CD8-positive, alpha-beta memory T cell (primary cell): ENCODE measurements at regions of chr17 and their contacts with region 1.

Region 1: GRCh38 chr17:76063875-76064546 is 8.3 kb downstream of the SRP68 start:
- DNase-seq: peak in 1 of 5 donors; percentile 31
- H3K4me3 ChIP-seq: no peak overlapping the region
- H3K4me3 Mint-ChIP-seq: peak overlapping the region; percentile 10 to 76 (median 64)
- H3K27ac ChIP-seq: no peak overlapping the region
- H3K27ac Mint-ChIP-seq: peak overlapping the region; percentile 73 to 97 (median 90)
- H3K4me1 ChIP-seq: no peaks in the 10 kb centered on the region
- H3K4me1 Mint-ChIP-seq: peaks cover 13 to 32% (median 24%) of the 10 kb centered on the region in 3 donors
- H3K27me3 ChIP-seq: no peaks in the 10 kb centered on the region
- H3K27me3 Mint-ChIP-seq: no peaks in the 10 kb centered on the region

Region 2: GRCh38 chr17:76179496-76180467 is 115.8 kb after region 1 on chr17:
- CTCF ChIA-PET with region 1: no interaction called
- POLR2A ChIA-PET with region 1: no interaction called
- DNase-seq: peak in 3 of 5 donors; percentile 49 to 76 (median 55)
- H3K4me3 ChIP-seq: peak overlapping the region; percentile 21
- H3K4me3 Mint-ChIP-seq: peak overlapping the region; percentile 8 to 57 (median 45)
- H3K27ac ChIP-seq: peak overlapping the region; percentile 28
- H3K27ac Mint-ChIP-seq: peak overlapping the region; percentile 83 to 95 (median 90)
- H3K4me1 ChIP-seq: peaks cover 77% of the 10 kb centered on the region
- H3K4me1 Mint-ChIP-seq: peaks cover 34 to 57% (median 52%) of the 10 kb centered on the region in 3 donors
- H3K27me3 ChIP-seq: no peaks in the 10 kb centered on the region
- H3K27me3 Mint-ChIP-seq: no peaks in the 10 kb centered on the region

Region 3: DNA sequence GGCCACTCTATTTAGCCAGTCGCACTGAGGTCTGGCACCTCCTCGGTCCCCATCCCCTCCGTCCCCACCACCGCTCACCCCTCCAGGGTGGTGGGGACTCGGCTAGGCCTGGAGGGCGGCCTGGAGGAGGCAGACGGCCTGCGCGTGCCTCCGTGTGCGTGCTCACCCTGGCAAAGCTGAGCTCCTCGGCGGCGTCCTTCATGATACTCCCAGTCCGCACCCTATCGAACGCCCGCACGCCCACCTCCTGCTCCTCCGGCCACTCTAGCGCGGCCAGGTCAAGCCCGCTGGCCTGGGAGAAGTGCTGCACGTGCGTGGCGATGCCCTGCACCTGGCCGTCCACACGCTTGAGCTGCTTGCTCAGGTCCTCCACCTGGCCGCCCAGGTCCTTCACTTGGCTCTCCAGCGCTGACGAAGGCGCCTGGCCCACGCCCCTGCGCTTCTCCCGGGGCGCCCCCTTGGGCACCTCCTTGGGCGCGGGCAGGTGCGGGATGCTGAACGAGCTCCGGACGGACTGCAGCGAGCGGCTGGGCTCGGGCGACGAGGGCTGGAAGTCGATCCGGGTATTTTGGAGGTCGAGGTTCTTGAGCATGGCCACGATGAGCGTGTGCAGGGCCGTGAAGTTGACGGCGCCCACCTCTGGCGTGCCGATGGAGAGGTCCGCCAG is 243.4 kb after region 1 on chr17:
- CTCF ChIA-PET with region 1: no interaction called
- POLR2A ChIA-PET with region 1: interaction called, 10 read pairs
- DNase-seq: no peak
- H3K4me3 ChIP-seq: no peak overlapping the region
- H3K4me3 Mint-ChIP-seq: no peak overlapping the region
- H3K27ac ChIP-seq: no peak overlapping the region
- H3K27ac Mint-ChIP-seq: no peak overlapping the region
- H3K4me1 ChIP-seq: no peaks in the 10 kb centered on the region
- H3K4me1 Mint-ChIP-seq: peaks cover 0 to 4% (median 2%) of the 10 kb centered on the region in 3 donors
- H3K27me3 ChIP-seq: no peaks in the 10 kb centered on the region
- H3K27me3 Mint-ChIP-seq: peaks cover 0 to 1% of the 10 kb centered on the region in 2 donors